ENCODE measurements at regions of chr6 and their contacts with region 1.

Region 1: GRCh38 chr6:129598244-129599187 is 111.5 kb downstream of the ARHGAP18 start:
- DNase-seq: peak; percentile 76
- ATAC-seq: peak; percentile 88
- H3K4me3 ChIP-seq: no peak overlapping the region
- H3K27ac ChIP-seq: peak overlapping the region; percentile 16
- H3K4me1 ChIP-seq: peaks cover 11% of the 10 kb centered on the region
- H3K27me3 ChIP-seq: no peaks in the 10 kb centered on the region
- CTCF ChIP-seq: peak; percentile 59 to 90 (median 78)
- EP300 ChIP-seq: no peak
- POLR2A ChIP-seq: no peak
- RAD21 ChIP-seq: peak; percentile 99

Region 2: GRCh38 chr6:129306826-129307225 is 291.7 kb before region 1 on chr6:
- CTCF ChIA-PET with region 1: no interaction called
- POLR2A ChIA-PET with region 1: no interaction called
- RAD21 ChIA-PET with region 1: no interaction called
- SMC1A ChIA-PET with region 1: no interaction called
- in situ Hi-C with region 1: no loop called
- intact Hi-C with region 1: no loop called
- DNase-seq: no peak
- ATAC-seq: no peak
- H3K4me3 ChIP-seq: no peak overlapping the region
- H3K27ac ChIP-seq: no peak overlapping the region
- H3K4me1 ChIP-seq: no peaks in the 10 kb centered on the region
- H3K27me3 ChIP-seq: no peaks in the 10 kb centered on the region
- CTCF ChIP-seq: no peak
- EP300 ChIP-seq: no peak
- POLR2A ChIP-seq: no peak
- RAD21 ChIP-seq: no peak

Region 3: GRCh38 chr6:129345890-129346289 is 252.6 kb before region 1 on chr6:
- CTCF ChIA-PET with region 1: no interaction called
- POLR2A ChIA-PET with region 1: no interaction called
- RAD21 ChIA-PET with region 1: no interaction called
- SMC1A ChIA-PET with region 1: no interaction called
- in situ Hi-C with region 1: no loop called
- intact Hi-C with region 1: no loop called
- DNase-seq: no peak
- ATAC-seq: no peak
- H3K4me3 ChIP-seq: no peak overlapping the region
- H3K27ac ChIP-seq: no peak overlapping the region
- H3K4me1 ChIP-seq: no peaks in the 10 kb centered on the region
- H3K27me3 ChIP-seq: no peaks in the 10 kb centered on the region
- CTCF ChIP-seq: no peak
- EP300 ChIP-seq: no peak
- POLR2A ChIP-seq: no peak
- RAD21 ChIP-seq: no peak

Region 4: GRCh38 chr6:129615020-129615419 is 16.5 kb after region 1 on chr6:
- CTCF ChIA-PET with region 1: interaction called, 12 read pairs
- POLR2A ChIA-PET with region 1: no interaction called
- RAD21 ChIA-PET with region 1: interaction called, 3 read pairs
- SMC1A ChIA-PET with region 1: interaction called, 18 read pairs
- in situ Hi-C with region 1: no loop called
- intact Hi-C with region 1: no loop called
- DNase-seq: no peak
- ATAC-seq: no peak
- H3K4me3 ChIP-seq: no peak overlapping the region
- H3K27ac ChIP-seq: no peak overlapping the region
- H3K4me1 ChIP-seq: no peaks in the 10 kb centered on the region
- H3K27me3 ChIP-seq: no peaks in the 10 kb centered on the region
- CTCF ChIP-seq: no peak
- EP300 ChIP-seq: no peak
- POLR2A ChIP-seq: no peak
- RAD21 ChIP-seq: no peak

Region 5: DNA sequence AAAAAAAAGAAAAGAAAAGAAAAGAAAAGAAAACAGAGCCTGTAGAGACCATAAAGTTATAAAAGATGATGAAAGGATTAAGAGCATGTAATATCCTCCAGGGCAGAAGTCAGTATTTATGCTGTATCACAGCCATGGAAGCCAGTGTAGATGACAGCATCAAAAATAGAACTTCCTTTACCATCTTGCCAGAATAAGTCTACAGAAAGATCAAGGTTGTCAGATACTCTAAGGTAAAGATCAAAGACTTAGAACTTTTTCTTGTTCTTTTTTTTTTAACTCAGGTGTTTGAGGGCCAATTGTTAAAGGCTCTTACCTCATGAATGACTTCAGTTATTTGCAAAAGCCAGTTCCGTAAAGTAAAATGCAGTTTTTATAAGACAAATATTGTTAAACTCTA is 56.8 kb after region 1 on chr6:
- CTCF ChIA-PET with region 1: interaction called, 10 read pairs
- POLR2A ChIA-PET with region 1: no interaction called
- RAD21 ChIA-PET with region 1: interaction called, 9 read pairs
- SMC1A ChIA-PET with region 1: interaction called, 12 read pairs
- in situ Hi-C with region 1: no loop called
- intact Hi-C with region 1: no loop called
- DNase-seq: no peak
- ATAC-seq: no peak
- H3K4me3 ChIP-seq: no peak overlapping the region
- H3K27ac ChIP-seq: no peak overlapping the region
- H3K4me1 ChIP-seq: peaks cover 46% of the 10 kb centered on the region
- H3K27me3 ChIP-seq: no peaks in the 10 kb centered on the region
- CTCF ChIP-seq: no peak
- EP300 ChIP-seq: no peak
- POLR2A ChIP-seq: no peak
- RAD21 ChIP-seq: no peak

Region 6: GRCh38 chr6:129709769-129710449 is 111.4 kb after region 1 on chr6 and contains the start of gene ARHGAP18:
- CTCF ChIA-PET with region 1: interaction called, 33 read pairs
- POLR2A ChIA-PET with region 1: interaction called, 5 read pairs
- RAD21 ChIA-PET with region 1: interaction called, 50 read pairs
- SMC1A ChIA-PET with region 1: interaction called, 30 read pairs
- in situ Hi-C with region 1: no loop called
- intact Hi-C with region 1: no loop called
- DNase-seq: peak; percentile 78
- ATAC-seq: peak; percentile 92
- H3K4me3 ChIP-seq: peak within 1 kb of the TSS; percentile 94
- H3K27ac ChIP-seq: peak within 1 kb of the TSS; percentile 73
- H3K4me1 ChIP-seq: peaks cover 17% of the 10 kb centered on the region
- H3K27me3 ChIP-seq: no peaks in the 10 kb centered on the region
- CTCF ChIP-seq: no peak
- EP300 ChIP-seq: no peak
- POLR2A ChIP-seq: peak; percentile 77
- RAD21 ChIP-seq: no peak
- polyA plus RNA-seq, gene ARHGAP18: 24.9 to 28.0 TPM

Region 7: GRCh38 chr6:129748212-129748900 is 149.8 kb after region 1 on chr6:
- CTCF ChIA-PET with region 1: interaction called, 55 read pairs
- POLR2A ChIA-PET with region 1: interaction called, 5 read pairs
- RAD21 ChIA-PET with region 1: interaction called, 23 read pairs
- SMC1A ChIA-PET with region 1: interaction called, 32 read pairs
- in situ Hi-C with region 1: loop called (anchors 5 kb)
- intact Hi-C with region 1: no loop called
- DNase-seq: peak; percentile 82
- ATAC-seq: peak; percentile 85
- H3K4me3 ChIP-seq: peak overlapping the region; percentile 56
- H3K27ac ChIP-seq: peak overlapping the region; percentile 96
- H3K4me1 ChIP-seq: peaks cover 42% of the 10 kb centered on the region
- H3K27me3 ChIP-seq: no peaks in the 10 kb centered on the region
- CTCF ChIP-seq: no peak
- EP300 ChIP-seq: 0 out of 4 replicates have a peak, but pooled peaks of 1 of the 2 experiments have one; percentile 29
- POLR2A ChIP-seq: peak; percentile 51
- RAD21 ChIP-seq: no peak

Region 8: DNA sequence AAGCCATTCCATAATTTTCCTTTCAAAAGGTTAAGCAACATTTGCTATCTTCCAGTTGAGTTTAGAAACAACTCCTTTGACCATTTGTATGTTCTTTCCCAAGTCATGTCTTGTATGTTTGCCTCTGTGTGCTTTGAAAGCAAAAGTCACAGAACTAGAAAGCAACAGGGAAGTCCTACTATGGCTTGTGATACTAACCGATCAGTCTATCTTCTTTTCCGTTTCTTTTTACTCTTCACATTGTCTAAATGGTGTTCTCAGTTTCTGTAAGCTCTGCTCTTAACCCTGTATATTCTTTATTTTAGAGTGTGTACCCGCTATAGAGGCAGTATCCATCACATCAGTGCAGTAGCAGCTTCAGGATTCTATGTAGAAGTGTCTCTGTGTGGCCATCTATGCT is 229.7 kb after region 1 on chr6:
- CTCF ChIA-PET with region 1: no interaction called
- POLR2A ChIA-PET with region 1: no interaction called
- RAD21 ChIA-PET with region 1: no interaction called
- SMC1A ChIA-PET with region 1: no interaction called
- in situ Hi-C with region 1: no loop called
- intact Hi-C with region 1: no loop called
- DNase-seq: no peak
- ATAC-seq: peak; percentile 61
- H3K4me3 ChIP-seq: no peak overlapping the region
- H3K27ac ChIP-seq: no peak overlapping the region
- H3K4me1 ChIP-seq: no peaks in the 10 kb centered on the region
- H3K27me3 ChIP-seq: no peaks in the 10 kb centered on the region
- CTCF ChIP-seq: no peak
- EP300 ChIP-seq: no peak
- POLR2A ChIP-seq: no peak
- RAD21 ChIP-seq: no peak

Region 9: GRCh38 chr6:129936329-129937165 is 338.0 kb after region 1 on chr6:
- CTCF ChIA-PET with region 1: interaction called, 20 read pairs
- POLR2A ChIA-PET with region 1: no interaction called
- RAD21 ChIA-PET with region 1: interaction called, 10 read pairs
- SMC1A ChIA-PET with region 1: interaction called, 13 read pairs
- in situ Hi-C with region 1: no loop called
- intact Hi-C with region 1: loop called (anchors 5 kb)
- DNase-seq: peak; percentile 21
- ATAC-seq: peak; percentile 84
- H3K4me3 ChIP-seq: no peak overlapping the region
- H3K27ac ChIP-seq: no peak overlapping the region
- H3K4me1 ChIP-seq: no peaks in the 10 kb centered on the region
- H3K27me3 ChIP-seq: no peaks in the 10 kb centered on the region; a peak in 1 of 4 replicates
- CTCF ChIP-seq: peak; percentile 64 to 77 (median 66)
- EP300 ChIP-seq: no peak
- POLR2A ChIP-seq: no peak
- RAD21 ChIP-seq: peak; percentile 81

Region 10: GRCh38 chr6:130054725-130055124 is 456.2 kb after region 1 on chr6:
- CTCF ChIA-PET with region 1: no interaction called
- POLR2A ChIA-PET with region 1: no interaction called
- RAD21 ChIA-PET with region 1: no interaction called
- SMC1A ChIA-PET with region 1: no interaction called
- in situ Hi-C with region 1: no loop called
- intact Hi-C with region 1: no loop called
- DNase-seq: no peak
- ATAC-seq: no peak
- H3K4me3 ChIP-seq: no peak overlapping the region
- H3K27ac ChIP-seq: no peak overlapping the region
- H3K4me1 ChIP-seq: no peaks in the 10 kb centered on the region
- H3K27me3 ChIP-seq: no peaks in the 10 kb centered on the region
- CTCF ChIP-seq: no peak
- EP300 ChIP-seq: no peak
- POLR2A ChIP-seq: no peak
- RAD21 ChIP-seq: no peak

Measured in GM12878 (cell line).